Activated CD8-positive, alpha-beta T cell treated with anti-CD3 and anti-CD28 coated beads, Interleukin-2, amount 10 ng/mL, durations not matched to agents 7 days and 5 days (primary cell): ENCODE measurements at regions of chr6 and their contacts with region 1.

Region 1: DNA sequence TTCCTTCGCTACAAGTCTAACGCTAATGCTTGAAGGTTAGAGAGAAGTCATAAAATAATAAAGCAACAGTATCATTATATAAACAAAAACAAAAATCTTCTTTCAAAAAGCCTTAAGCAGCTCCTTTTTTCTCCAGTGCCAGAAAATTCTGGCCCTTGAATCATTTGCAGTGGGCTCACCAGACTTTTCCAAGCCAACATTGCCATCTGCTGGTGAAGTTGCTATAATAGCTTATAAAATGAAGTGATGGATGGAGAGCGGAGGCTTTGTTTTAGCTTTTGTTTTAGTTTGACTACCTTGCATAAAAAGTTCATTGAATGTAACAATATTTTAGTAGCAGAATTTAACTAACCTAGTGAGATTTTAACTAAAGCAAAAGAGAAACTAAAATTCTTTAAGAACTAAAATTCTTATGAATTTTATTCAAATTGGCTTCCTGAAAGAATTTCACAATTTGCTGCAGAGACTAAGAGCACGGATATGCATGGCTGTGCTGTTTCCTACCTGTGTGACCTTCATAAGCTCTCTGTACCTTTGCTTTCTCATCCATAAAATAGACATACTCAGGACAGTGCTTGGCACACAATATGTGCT is 44.8 kb upstream of the SLC2A12 start:
- DNase-seq: peak; percentile 79
- ATAC-seq: peak; percentile 68
- H3K4me3 Mint-ChIP-seq: no peak overlapping the region
- H3K27ac Mint-ChIP-seq: no peak overlapping the region
- H3K4me1 Mint-ChIP-seq: peaks cover 6% of the 10 kb centered on the region
- H3K27me3 Mint-ChIP-seq: peaks cover 23% of the 10 kb centered on the region

Region 2: DNA sequence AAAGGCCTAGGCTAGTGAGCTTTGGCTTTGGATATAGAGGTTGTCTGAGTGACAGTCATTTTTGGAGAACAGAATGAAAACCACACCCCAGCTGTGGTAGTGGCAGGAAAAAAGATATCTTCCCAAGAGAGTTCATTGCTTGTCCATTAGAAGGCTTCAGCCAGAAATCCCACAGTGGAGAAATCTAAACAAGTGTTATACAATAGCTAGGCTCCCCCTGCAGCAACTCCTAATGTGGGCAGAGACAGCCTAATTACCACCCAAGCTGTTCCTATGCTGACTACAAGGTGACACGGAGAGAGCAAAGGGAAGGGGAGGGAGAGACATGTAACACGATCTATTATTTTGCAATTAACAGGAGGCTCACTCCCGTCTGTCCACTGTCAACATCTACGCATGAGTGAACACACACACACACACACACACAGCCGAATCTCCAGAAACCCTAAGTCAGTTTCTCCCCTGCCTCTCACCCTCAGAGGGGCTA is 355.8 kb before region 1 on chr6:
- CTCF ChIA-PET with region 1: no interaction called
- POLR2A ChIA-PET with region 1: no interaction called
- DNase-seq: no peak
- ATAC-seq: no peak
- H3K4me3 Mint-ChIP-seq: no peak overlapping the region
- H3K27ac Mint-ChIP-seq: no peak overlapping the region
- H3K4me1 Mint-ChIP-seq: no peaks in the 10 kb centered on the region
- H3K27me3 Mint-ChIP-seq: no peaks in the 10 kb centered on the region

Region 3: GRCh38 chr6:133916650-133917151 is 180.5 kb before region 1 on chr6:
- CTCF ChIA-PET with region 1: interaction called, 276 read pairs
- POLR2A ChIA-PET with region 1: no interaction called
- DNase-seq: peak; percentile 86
- ATAC-seq: peak; percentile 75
- H3K4me3 Mint-ChIP-seq: no peak overlapping the region
- H3K27ac Mint-ChIP-seq: no peak overlapping the region
- H3K4me1 Mint-ChIP-seq: peaks cover 9% of the 10 kb centered on the region
- H3K27me3 Mint-ChIP-seq: peaks cover 24% of the 10 kb centered on the region

Region 4: DNA sequence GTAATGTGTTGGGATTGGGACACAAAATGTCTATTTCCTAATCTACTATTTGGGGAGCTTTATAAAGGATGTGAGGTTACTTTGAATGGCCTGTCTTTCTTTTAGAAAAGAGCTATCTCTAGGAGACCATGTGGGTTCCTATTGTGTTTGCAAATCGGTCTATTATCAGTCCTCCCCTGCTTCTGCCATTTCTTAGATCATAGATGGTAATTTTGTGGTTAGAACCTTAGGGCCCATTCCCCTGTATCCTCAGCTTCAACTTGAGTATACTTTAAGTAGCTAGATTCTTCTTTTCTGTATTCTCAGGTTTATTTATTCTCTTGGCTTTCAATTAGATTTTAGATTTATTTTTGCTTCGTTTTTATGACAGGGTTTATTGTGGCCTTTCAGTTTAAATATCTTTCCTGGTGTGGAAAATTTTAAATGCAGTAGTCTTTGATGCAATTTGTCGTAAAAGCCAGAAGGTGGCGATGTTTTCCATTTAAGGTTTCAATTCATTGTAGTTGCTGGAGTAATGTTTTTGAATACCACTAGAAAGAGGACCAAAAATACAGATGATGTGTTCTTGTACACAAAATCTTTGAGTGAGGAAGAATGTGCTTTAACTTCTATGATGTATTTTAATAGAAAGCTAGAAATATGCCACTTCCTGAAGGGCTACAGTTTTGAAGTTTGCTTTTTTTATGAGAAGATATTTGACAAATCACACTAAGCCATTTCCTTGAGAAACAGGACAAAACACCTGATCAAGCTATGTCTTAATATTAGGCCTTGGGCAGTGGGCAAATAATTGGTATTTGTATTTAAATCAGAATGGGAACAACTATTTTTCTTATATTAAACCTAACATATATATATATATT is 123.9 kb before region 1 on chr6:
- CTCF ChIA-PET with region 1: interaction called, 63 read pairs
- POLR2A ChIA-PET with region 1: no interaction called
- DNase-seq: no peak
- ATAC-seq: peak; percentile 45
- H3K4me3 Mint-ChIP-seq: no peak overlapping the region
- H3K27ac Mint-ChIP-seq: no peak overlapping the region
- H3K4me1 Mint-ChIP-seq: peaks cover 17% of the 10 kb centered on the region
- H3K27me3 Mint-ChIP-seq: no peaks in the 10 kb centered on the region

Region 5: GRCh38 chr6:134047673-134048072 is 49.5 kb before region 1 on chr6:
- CTCF ChIA-PET with region 1: interaction called, 10 read pairs
- POLR2A ChIA-PET with region 1: no interaction called
- DNase-seq: no peak
- ATAC-seq: no peak
- H3K4me3 Mint-ChIP-seq: no peak overlapping the region
- H3K27ac Mint-ChIP-seq: no peak overlapping the region
- H3K4me1 Mint-ChIP-seq: peaks cover 11% of the 10 kb centered on the region
- H3K27me3 Mint-ChIP-seq: peaks cover 13% of the 10 kb centered on the region

Region 6: GRCh38 chr6:134080171-134080795 is 16.9 kb before region 1 on chr6:
- CTCF ChIA-PET with region 1: interaction called, 20 read pairs
- POLR2A ChIA-PET with region 1: no interaction called
- DNase-seq: peak; percentile 22
- ATAC-seq: peak; percentile 15
- H3K4me3 Mint-ChIP-seq: no peak overlapping the region
- H3K27ac Mint-ChIP-seq: no peak overlapping the region
- H3K4me1 Mint-ChIP-seq: peaks cover 26% of the 10 kb centered on the region
- H3K27me3 Mint-ChIP-seq: peaks cover 8% of the 10 kb centered on the region